ENCODE measurements at regions of chr4 and their contacts with region 1.

Region 1: DNA sequence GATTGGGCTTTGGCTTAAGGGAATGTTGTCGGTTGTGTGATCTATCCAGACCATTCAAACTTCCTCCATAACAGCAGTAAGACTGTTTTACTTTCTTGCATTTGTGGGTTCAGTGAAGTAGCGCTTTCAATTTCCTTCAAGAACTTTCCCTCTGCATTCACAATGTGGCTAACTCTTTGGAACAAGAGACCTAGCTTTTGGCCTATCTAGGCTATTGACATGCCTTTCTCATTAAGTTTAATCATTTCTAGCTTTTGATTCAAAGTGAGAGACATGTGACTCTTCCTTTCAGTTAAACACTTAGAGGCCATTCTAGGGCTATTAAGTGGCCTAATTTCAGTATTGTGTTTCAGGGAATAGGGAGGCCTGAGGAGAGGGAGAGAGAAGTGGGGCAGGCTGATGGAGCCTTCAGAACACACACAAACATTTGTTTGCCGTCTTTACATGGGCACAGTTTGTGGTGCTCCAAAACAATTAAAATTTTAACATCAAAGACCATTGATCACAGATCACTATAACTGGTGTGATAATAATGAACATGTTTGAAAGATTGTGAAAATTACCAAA is 34.1 kb downstream of the ADH5 start:
- DNase-seq: no peak
- CTCF ChIP-seq: no peak

Region 2: GRCh38 chr4:98467627-98468072 is 586.9 kb before region 1 on chr4:
- CTCF ChIA-PET with region 1: interaction called, 28 read pairs
- POLR2A ChIA-PET with region 1: no interaction called
- DNase-seq: peak; percentile 76
- CTCF ChIP-seq: peak; percentile 81

Region 3: DNA sequence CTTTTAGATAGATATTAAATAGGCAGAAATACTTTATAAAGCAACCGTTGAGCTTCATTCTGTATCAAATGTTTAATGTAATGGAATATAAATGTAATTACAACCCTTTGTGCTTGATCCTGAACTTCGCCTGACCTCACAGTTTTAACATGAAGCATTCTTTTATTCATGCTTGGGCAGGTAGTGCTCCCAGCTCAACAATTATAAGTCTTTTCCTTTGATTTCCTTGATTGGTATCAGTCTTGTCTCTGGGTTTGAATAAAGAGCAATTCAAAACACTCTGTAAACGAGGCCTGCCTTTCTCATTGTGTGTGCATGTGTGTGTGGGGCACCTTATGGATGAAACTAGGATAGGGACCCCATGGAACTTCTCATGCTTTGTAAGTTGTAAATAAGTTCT is 52.2 kb before region 1 on chr4:
- CTCF ChIA-PET with region 1: interaction called, 165 read pairs
- POLR2A ChIA-PET with region 1: no interaction called
- DNase-seq: no peak
- CTCF ChIP-seq: no peak

Region 4: GRCh38 chr4:99028187-99028586 is 26.3 kb before region 1 on chr4:
- CTCF ChIA-PET with region 1: interaction called, 25 read pairs
- POLR2A ChIA-PET with region 1: no interaction called
- DNase-seq: no peak
- CTCF ChIP-seq: no peak

Region 5: DNA sequence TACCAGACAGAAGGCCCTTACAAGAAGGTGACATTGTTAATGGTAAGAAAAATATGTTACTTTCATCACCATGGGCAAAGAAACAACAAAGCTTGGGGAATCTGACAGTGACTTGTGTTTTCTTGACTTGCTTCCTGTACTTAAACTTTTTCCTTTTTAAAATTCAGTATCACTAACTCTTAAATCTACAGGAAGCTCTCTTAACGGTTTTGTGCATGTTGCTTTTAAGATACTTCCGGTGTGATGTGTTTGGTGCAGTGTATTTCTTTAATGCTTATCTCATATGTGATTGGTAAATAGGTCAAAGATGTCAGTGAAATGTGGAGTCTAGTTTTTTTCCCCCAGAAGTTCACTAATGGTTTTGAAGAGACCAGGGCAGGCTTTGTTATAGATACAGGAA is 11.2 kb before region 1 on chr4:
- CTCF ChIA-PET with region 1: interaction called, 23 read pairs
- POLR2A ChIA-PET with region 1: interaction called, 3 read pairs
- DNase-seq: no peak
- CTCF ChIP-seq: no peak

Region 6: DNA sequence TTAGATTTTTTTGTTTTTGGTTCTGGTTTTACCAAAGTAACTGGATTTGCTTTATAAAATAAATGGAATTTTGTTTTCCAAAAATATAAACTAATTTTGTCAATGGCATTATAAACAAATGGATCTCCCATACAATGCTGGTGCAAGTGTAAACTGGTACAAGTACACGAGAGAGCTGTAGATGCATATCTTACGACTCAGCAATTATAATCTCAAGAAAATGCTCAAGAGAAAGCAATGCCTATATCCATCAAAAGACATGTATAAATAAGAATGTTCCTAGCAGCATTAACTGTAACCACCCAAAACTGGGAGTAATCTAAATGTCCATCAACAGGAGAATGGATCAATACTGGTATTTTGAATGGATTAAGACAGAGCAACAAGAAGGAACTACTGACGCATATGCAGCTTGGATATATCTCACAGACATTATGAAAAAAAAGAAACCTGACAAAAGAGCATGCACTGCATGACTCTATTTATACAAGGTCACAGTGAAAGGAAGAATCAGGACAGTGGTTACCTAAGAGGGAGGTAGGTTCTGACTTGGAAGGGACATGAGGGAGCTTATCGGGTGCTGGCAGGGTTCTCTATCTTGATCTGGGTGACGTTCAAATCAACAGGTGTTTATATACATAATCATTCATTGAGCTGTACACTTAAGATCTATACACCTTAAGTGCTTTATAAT is 24.6 kb after region 1 on chr4:
- CTCF ChIA-PET with region 1: interaction called, 13 read pairs
- POLR2A ChIA-PET with region 1: no interaction called
- DNase-seq: no peak
- CTCF ChIP-seq: no peak